Posterior cingulate gyrus (tissue), 11 donors: ENCODE measurements at regions of chrX and their contacts with region 1.

Region 1: GRCh38 chrX:78555401-78555980 is 103.6 kb downstream of the RTL3 start:
- DNase-seq: no peak

Region 2: DNA sequence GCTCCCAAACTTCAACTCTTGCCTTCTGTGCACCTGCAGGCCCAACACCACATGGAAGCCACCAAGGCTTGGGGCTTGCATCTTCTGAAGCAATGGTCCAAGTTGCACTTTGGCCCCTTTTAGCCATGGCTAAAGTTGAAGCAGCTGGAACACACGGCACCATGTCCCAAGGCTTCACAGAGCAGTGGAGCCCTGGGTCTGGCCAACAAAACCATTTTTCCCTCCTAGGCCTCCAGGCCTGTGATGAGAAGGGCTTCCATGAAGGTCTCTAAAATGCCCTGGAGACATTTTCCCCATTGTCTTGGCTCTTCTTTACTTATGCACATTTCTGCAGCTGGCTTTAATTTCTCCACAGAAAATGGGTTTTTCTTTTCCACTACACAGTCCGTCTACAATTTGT is 166.8 kb before region 1 on chrX:
- intact Hi-C with region 1: no loop called
- DNase-seq: no peak

Region 3: GRCh38 chrX:78514852-78515251 is 40.6 kb before region 1 on chrX:
- intact Hi-C with region 1: no loop called
- DNase-seq: no peak

Region 4: GRCh38 chrX:78603908-78604307 is 48.4 kb after region 1 on chrX:
- intact Hi-C with region 1: no loop called
- DNase-seq: no peak

Region 5: DNA sequence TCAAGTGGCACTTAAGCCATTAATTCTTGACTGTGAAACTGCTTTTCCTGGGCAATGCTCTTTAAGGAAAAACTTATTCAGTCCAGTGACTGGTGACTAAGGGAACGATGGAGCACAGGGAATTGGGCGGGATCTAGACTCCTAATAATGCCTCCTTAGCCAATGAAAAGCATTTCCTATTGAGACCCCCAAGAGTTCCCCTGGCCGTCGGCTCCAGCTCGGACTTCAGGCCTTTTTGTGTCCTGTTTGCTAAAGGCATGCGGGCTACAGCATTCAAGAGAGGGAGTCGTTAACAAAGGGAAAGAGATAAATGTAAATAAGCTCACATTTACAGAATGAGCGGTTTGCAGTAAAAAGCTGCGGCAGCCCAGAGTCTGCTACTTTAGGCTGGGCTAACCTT is 192.0 kb after region 1 on chrX and contains the start of gene LPAR4:
- intact Hi-C with region 1: no loop called
- DNase-seq: no peak

Region 6: DNA sequence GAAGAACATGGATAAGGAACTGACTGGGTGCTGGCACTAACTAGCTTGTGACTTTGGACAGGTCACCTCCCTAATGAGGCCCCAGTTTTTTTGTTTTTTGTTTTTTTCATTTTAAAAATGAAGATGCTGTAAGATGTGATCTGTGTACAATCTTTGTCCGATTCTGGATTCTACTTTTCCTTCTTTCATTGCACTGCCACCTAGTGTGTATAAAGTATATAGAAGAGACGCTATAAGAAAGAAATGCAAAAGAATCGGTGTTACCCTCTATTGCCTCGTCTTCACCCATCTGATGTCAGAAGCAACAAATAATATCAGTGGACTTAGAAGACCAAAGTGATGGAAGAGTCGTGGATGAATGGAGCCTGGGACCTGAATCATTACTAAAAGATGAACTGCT is 331.1 kb after region 1 on chrX:
- intact Hi-C with region 1: loop called (anchors 10 kb)
- DNase-seq: no peak

Region 7: GRCh38 chrX:79081895-79082512 is 526.5 kb after region 1 on chrX:
- intact Hi-C with region 1: loop called (anchors 10 kb)
- DNase-seq: no peak

Region 8: GRCh38 chrX:79412972-79413371 is 857.5 kb after region 1 on chrX:
- intact Hi-C with region 1: loop called (anchors 10 kb)
- DNase-seq: no peak

Region 9: GRCh38 chrX:79444694-79445210 is 889.3 kb after region 1 on chrX:
- intact Hi-C with region 1: loop called (anchors 10 kb)
- DNase-seq: no peak